ENCODE measurements at regions of chr2 and their contacts with region 1.

Region 1: DNA sequence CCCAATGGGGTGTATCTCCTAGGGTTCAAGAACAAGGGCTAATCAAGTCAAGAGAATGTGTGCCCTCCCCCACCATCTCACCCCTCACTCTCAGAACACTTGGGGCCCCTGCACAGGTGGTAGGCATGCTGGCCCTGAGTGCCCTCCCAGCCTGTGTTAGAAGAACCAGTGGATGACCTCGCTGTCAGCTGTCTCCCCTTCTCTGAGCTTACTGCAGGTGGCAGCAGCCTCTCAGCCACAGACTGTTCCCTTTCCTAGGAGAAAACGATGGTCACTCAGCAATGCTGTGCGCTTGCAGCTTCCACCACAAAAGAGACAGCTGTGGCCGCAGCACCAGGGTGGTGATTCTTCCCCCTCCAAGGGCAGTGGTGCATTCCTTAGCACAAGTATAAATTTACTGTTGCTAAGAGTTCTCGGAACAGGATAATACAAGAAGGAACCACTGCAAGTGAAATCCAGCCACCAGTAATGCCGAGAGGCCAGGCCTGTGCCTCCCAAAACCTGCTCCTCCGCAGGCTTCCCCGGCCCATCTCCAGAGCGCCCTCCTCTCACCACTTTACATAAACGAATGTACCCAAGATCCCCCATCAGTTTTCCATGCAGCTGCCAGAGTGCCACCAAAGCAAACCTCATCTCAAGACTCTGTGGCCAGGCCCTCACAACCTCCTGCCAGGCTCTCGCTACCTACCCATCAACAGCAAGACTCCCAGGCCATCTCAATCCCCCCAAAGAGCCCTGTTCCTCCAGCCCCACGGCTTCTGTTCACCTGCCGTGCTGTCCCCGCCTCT is 935 bp upstream of the RAMP1 start:
- DNase-seq: peak; percentile 87
- H3K4me3 Mint-ChIP-seq: peak overlapping the region; percentile 65
- H3K27ac Mint-ChIP-seq: peak overlapping the region; percentile 30
- H3K4me1 Mint-ChIP-seq: peaks cover 12% of the 10 kb centered on the region
- H3K27me3 Mint-ChIP-seq: peaks cover 52% of the 10 kb centered on the region

Region 2: GRCh38 chr2:237700512-237701032 is 157.9 kb before region 1 on chr2:
- intact Hi-C with region 1: no loop called
- DNase-seq: peak; percentile 93
- H3K4me3 Mint-ChIP-seq: peak overlapping the region; percentile 87
- H3K27ac Mint-ChIP-seq: peak overlapping the region; percentile 99
- H3K4me1 Mint-ChIP-seq: peaks cover 84% of the 10 kb centered on the region
- H3K27me3 Mint-ChIP-seq: no peaks in the 10 kb centered on the region

Region 3: DNA sequence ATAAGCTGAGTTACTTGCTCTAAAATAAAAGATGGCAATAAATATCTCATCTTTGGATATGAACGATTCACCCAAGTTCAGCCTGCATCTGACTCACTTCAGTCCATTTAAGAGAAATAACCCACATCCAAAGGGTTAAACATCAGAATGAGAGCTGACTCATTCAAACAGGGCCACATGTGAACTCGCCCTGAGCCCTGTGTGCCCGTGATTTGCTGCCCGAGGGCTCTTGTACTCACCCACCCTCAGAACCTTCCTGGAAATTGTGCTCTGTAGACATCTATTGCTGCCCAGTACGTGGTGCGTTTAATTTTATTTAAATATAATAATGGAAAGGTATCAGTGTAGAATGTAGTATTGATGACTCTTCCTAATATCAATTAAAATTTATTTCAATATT is 126.8 kb before region 1 on chr2:
- intact Hi-C with region 1: no loop called
- DNase-seq: no peak
- H3K4me3 Mint-ChIP-seq: peak overlapping the region; percentile 63
- H3K27ac Mint-ChIP-seq: peak overlapping the region; percentile 57
- H3K4me1 Mint-ChIP-seq: peaks cover 41% of the 10 kb centered on the region
- H3K27me3 Mint-ChIP-seq: no peaks in the 10 kb centered on the region

Region 4: GRCh38 chr2:237774802-237775553 is 83.5 kb before region 1 on chr2:
- intact Hi-C with region 1: no loop called
- DNase-seq: peak; percentile 83
- H3K4me3 Mint-ChIP-seq: no peak overlapping the region
- H3K27ac Mint-ChIP-seq: no peak overlapping the region
- H3K4me1 Mint-ChIP-seq: peaks cover 2% of the 10 kb centered on the region
- H3K27me3 Mint-ChIP-seq: no peaks in the 10 kb centered on the region

Region 5: GRCh38 chr2:237898057-237898414 is 39.5 kb after region 1 on chr2:
- intact Hi-C with region 1: loop called (anchors 2 kb)
- DNase-seq: no peak
- H3K4me3 Mint-ChIP-seq: peak overlapping the region; percentile 63
- H3K27ac Mint-ChIP-seq: peak overlapping the region; percentile 90
- H3K4me1 Mint-ChIP-seq: peaks cover 47% of the 10 kb centered on the region
- H3K27me3 Mint-ChIP-seq: no peaks in the 10 kb centered on the region

Region 6: GRCh38 chr2:237923481-237924163 is 65.1 kb after region 1 on chr2:
- intact Hi-C with region 1: loop called (anchors 5 kb)
- DNase-seq: peak; percentile 95
- H3K4me3 Mint-ChIP-seq: peak overlapping the region; percentile 66
- H3K27ac Mint-ChIP-seq: peak overlapping the region; percentile 86
- H3K4me1 Mint-ChIP-seq: peaks cover 37% of the 10 kb centered on the region
- H3K27me3 Mint-ChIP-seq: no peaks in the 10 kb centered on the region

Region 7: DNA sequence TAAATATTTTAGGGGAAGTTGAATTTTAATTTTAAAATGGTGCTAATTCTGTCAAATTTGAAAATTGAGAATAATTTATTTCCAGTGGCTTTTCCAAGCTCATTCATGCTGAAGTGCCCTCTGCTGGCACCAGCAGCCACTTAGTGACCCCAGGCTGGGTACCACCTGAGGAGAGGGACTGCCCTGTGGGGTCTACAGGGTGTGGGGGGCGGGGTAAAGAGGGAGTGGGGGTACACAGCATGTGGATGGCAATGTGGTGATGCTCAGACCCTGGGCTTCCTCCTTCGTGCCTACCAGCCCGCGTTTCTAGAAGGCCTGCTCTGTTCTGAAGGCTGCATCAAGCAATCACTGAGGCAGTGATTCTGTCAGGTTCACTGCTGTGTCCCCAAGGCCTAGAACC is 157.2 kb after region 1 on chr2:
- intact Hi-C with region 1: loop called (anchors 10 kb)
- DNase-seq: no peak
- H3K4me3 Mint-ChIP-seq: no peak overlapping the region
- H3K27ac Mint-ChIP-seq: no peak overlapping the region
- H3K4me1 Mint-ChIP-seq: peaks cover 16% of the 10 kb centered on the region
- H3K27me3 Mint-ChIP-seq: no peaks in the 10 kb centered on the region

Region 8: GRCh38 chr2:238139196-238140039 is 280.9 kb after region 1 on chr2:
- intact Hi-C with region 1: loop called (anchors 10 kb)
- DNase-seq: peak; percentile 81
- H3K4me3 Mint-ChIP-seq: no peak overlapping the region
- H3K27ac Mint-ChIP-seq: no peak overlapping the region
- H3K4me1 Mint-ChIP-seq: no peaks in the 10 kb centered on the region
- H3K27me3 Mint-ChIP-seq: no peaks in the 10 kb centered on the region

Region 9: DNA sequence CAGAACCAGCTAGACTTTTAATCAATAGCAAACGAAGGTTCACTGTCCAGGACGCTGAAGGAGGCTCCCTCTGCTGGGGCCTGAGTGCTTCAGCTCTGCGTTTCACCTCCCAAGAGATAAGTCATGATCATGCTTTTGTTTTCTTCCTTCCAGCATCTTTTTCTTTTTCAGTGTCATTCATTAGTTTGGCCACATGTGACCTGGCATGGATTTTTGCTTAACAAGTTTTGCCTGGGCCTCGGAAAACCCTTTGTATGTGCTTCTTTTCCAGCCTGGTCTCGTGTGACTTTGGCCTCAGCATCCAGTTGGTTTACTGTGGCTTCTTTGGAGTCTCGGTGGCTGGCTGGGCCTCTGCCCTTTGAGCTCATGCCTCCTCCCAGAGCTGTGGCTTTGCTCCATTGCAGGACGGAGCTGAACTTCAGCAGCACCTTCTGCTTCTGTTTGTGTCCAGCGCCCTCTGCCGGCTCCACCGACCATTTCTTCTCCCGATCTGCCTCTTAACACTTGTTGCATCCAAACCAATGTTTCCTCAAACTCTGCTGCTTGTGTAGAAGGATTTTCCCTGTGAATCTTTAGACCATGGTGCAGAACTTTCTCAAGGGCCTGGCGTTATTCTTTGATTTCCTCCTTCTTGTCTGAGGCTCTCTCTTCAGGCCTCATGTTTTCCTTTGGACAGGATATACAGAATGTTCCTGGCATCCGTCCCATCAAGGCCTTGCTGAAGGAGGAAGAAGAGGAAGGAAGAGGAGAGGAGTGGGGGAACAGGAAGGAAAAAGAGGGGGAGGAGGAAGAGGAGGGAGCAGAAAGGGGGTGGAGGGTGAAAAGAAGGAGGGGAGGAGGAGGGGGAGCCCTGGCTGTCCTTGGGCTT is 404.9 kb after region 1 on chr2:
- intact Hi-C with region 1: loop called (anchors 1 kb)
- DNase-seq: peak; percentile 92
- H3K4me3 Mint-ChIP-seq: no peak overlapping the region
- H3K27ac Mint-ChIP-seq: no peak overlapping the region
- H3K4me1 Mint-ChIP-seq: peaks cover 11% of the 10 kb centered on the region
- H3K27me3 Mint-ChIP-seq: no peaks in the 10 kb centered on the region